ENCODE measurements at regions of chr2 and their contacts with region 1.

Region 1: GRCh38 chr2:219530048-219530963 is 13.3 kb downstream of the CHPF start:
- DNase-seq: peak; percentile 78
- ATAC-seq: peak; percentile 97
- H3K4me3 ChIP-seq: peak overlapping the region; percentile 22; the same call in 1 of the 2 replicates
- H3K27ac ChIP-seq: no peak overlapping the region
- H3K4me1 ChIP-seq: no peaks in the 10 kb centered on the region
- H3K27me3 ChIP-seq: peaks cover 58% of the 10 kb centered on the region
- CTCF ChIP-seq: peak; percentile 99
- POLR2A ChIP-seq: peak; percentile 62
- RAD21 ChIP-seq: peak; percentile 99

Region 2: DNA sequence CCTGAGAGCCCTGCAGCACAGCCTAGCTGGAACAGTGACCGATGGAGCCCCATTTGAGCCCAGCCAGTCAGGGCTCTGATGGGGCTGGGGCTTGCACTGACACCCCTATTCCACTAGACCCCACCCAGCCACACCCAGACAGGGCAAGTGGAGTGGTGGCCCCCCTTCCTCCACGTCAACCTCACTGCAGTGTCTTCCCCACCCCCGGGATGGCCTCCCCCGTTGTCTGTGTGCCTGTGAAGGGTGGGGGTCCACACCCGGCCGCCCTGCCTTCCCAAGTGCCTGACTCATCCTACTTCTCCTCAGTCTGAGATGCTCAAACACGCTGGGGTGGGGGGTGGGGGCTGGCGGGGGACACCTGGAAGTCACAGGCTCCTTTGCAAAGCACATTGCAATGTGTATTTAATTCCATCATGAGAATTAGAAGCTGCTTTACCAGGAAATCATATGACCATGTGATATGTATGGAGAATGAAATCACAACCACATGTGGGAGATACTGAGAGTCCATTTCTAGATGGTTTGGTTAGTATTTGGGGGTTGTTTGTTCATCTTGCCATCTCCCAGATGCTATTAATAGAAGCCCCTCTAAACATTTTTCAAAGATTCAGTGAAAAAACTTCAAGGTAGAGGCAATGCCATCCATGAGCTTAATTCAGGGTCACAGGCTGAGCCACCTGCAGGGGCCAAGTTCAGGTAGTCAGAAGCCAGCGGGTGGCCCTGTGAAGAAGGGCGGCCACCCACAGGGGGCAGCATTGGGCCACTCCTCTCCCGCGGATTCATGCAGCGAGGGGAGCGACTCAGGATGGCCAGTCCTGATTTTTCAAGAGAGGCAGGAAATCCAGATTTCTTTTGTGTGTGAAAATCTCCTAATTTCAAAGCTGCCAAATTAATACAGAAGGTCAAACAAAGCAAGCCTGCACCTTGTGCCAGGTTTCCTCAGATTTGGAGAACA is 54.3 kb before region 1 on chr2:
- CTCF ChIA-PET with region 1: interaction called, 5 read pairs
- POLR2A ChIA-PET with region 1: no interaction called
- dilution Hi-C with region 1: no loop called
- in situ Hi-C with region 1: no loop called
- intact Hi-C with region 1: loop called (anchors 1 kb)
- DNase-seq: peak; percentile 45
- ATAC-seq: peak; percentile 83
- H3K4me3 ChIP-seq: no peak overlapping the region
- H3K27ac ChIP-seq: no peak overlapping the region
- H3K4me1 ChIP-seq: peaks cover 3% of the 10 kb centered on the region; the same call in 1 of the 2 replicates
- H3K27me3 ChIP-seq: no peaks in the 10 kb centered on the region
- CTCF ChIP-seq: peak; percentile 80
- POLR2A ChIP-seq: no peak
- RAD21 ChIP-seq: peak; percentile 79

Region 3: GRCh38 chr2:219509780-219510511 is 20.4 kb before region 1 on chr2:
- CTCF ChIA-PET with region 1: interaction called, 14 read pairs
- POLR2A ChIA-PET with region 1: no interaction called
- dilution Hi-C with region 1: no loop called
- in situ Hi-C with region 1: no loop called
- intact Hi-C with region 1: loop called (anchors 1 kb)
- DNase-seq: peak; percentile 45
- ATAC-seq: peak; percentile 85
- H3K4me3 ChIP-seq: peak overlapping the region; percentile 26
- H3K27ac ChIP-seq: no peak overlapping the region
- H3K4me1 ChIP-seq: peaks cover 8% of the 10 kb centered on the region; the same call in 1 of the 2 replicates
- H3K27me3 ChIP-seq: peaks cover 46% of the 10 kb centered on the region
- CTCF ChIP-seq: peak; percentile 67
- POLR2A ChIP-seq: no peak
- RAD21 ChIP-seq: peak; percentile 42

Region 4: DNA sequence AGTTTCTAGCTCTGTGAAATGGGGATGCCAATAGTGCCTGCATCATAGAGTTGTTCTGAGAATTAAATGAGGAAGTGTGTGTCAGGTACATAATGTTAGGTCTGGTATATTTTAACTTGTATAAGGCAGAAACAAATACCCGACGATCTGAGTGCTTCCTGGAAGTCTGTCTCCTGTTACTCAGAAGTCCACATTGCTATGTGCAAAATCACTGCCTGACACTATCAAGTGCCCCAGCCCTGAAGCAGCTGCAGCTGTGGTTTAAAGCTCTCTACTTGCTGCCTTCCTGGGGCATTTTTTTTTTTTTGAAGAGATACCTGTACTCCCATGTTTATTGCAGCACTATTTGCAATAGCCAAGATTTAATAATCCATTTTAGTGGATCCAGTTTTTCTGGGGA is 222.4 kb after region 1 on chr2:
- CTCF ChIA-PET with region 1: no interaction called
- POLR2A ChIA-PET with region 1: no interaction called
- dilution Hi-C with region 1: no loop called
- in situ Hi-C with region 1: no loop called
- intact Hi-C with region 1: no loop called
- DNase-seq: peak; percentile 37
- ATAC-seq: no peak
- H3K4me3 ChIP-seq: no peak overlapping the region
- H3K27ac ChIP-seq: no peak overlapping the region
- H3K4me1 ChIP-seq: no peaks in the 10 kb centered on the region
- H3K27me3 ChIP-seq: peaks cover 2% of the 10 kb centered on the region; the same call in 1 of the 2 replicates
- CTCF ChIP-seq: no peak
- POLR2A ChIP-seq: no peak
- RAD21 ChIP-seq: no peak

Region 5: GRCh38 chr2:219987830-219988229 is 457.5 kb after region 1 on chr2:
- CTCF ChIA-PET with region 1: no interaction called
- POLR2A ChIA-PET with region 1: no interaction called
- dilution Hi-C with region 1: no loop called
- in situ Hi-C with region 1: no loop called
- intact Hi-C with region 1: no loop called
- DNase-seq: peak; percentile 93
- ATAC-seq: peak; percentile 90
- H3K4me3 ChIP-seq: no peak overlapping the region
- H3K27ac ChIP-seq: no peak overlapping the region
- H3K4me1 ChIP-seq: peaks cover 4% of the 10 kb centered on the region; the same call in 1 of the 2 replicates
- H3K27me3 ChIP-seq: no peaks in the 10 kb centered on the region
- CTCF ChIP-seq: no peak
- POLR2A ChIP-seq: no peak
- RAD21 ChIP-seq: no peak